ENCODE measurements at regions of chr1 and their contacts with region 1.

Region 1: GRCh38 chr1:30801771-30802198 is 44.2 kb upstream of the LAPTM5 start:
- DNase-seq: peak; percentile 42 to 55
- ATAC-seq: peak; percentile 66 to 78
- H3K4me3 ChIP-seq: peak overlapping the region in 1 of 4 donors; percentile 24
- H3K27ac ChIP-seq: no peak overlapping the region
- H3K4me1 ChIP-seq: peaks cover 3 to 26% of the 10 kb centered on the region in 2 donors
- H3K27me3 ChIP-seq: peaks cover 0 to 9% (median under 1%) of the 10 kb centered on the region in 3 donors
- CTCF ChIP-seq: peak; percentile 92 to 98 (median 95)
- POLR2A ChIP-seq: no peak

Region 2: GRCh38 chr1:30754684-30755171 is 47.1 kb before region 1 on chr1:
- in situ Hi-C with region 1: no loop called
- intact Hi-C with region 1: loop called (anchors 1 kb)
- DNase-seq: no peak
- ATAC-seq: peak; percentile 45 to 55
- H3K4me3 ChIP-seq: no peak overlapping the region
- H3K27ac ChIP-seq: no peak overlapping the region
- H3K4me1 ChIP-seq: no peaks in the 10 kb centered on the region
- H3K27me3 ChIP-seq: no peaks in the 10 kb centered on the region
- CTCF ChIP-seq: no peak
- POLR2A ChIP-seq: no peak

Region 3: DNA sequence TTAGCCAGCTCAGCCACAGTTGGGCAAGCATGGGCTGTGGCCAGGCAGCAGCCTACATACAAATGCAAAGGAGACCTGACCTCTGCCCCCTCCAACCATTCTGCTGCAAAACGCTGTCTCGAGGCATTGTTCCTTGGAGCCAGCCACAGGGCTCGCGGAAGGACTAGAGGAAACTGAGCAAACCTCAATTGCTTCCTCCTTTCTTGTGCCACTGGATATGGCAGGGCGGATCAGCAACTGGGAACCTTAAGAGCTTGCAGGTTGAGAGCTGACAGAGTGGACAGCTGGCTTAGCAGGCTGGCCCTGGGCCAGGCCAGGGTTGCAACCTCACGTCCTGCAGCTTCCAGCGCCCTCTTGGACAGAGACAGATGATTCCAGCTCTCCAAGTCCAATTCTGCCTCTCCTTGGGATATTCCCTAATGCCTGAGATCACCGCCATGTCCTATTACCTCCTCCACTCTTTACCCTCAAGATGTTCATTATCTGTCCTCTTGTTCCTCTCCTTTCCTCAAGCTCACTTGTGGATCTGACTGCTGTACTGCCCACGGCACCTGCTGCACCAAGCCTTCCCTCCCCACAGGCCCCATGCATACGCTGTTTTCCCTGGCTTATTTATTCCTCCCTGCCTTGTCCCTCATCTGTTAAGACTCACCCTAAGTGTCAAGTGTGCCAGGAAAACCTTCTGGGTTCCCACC is 39.3 kb after region 1 on chr1:
- in situ Hi-C with region 1: no loop called
- intact Hi-C with region 1: loop called (anchors 5 kb)
- DNase-seq: peak; percentile 32 to 58
- ATAC-seq: peak; percentile 65 to 81
- H3K4me3 ChIP-seq: no peak overlapping the region
- H3K27ac ChIP-seq: no peak overlapping the region
- H3K4me1 ChIP-seq: peaks cover 10 to 13% of the 10 kb centered on the region in 2 donors
- H3K27me3 ChIP-seq: peaks cover 0 to 2% (median 0%) of the 10 kb centered on the region in 3 donors
- CTCF ChIP-seq: no peak
- POLR2A ChIP-seq: no peak

Region 4: GRCh38 chr1:30911046-30911954 is 109.5 kb after region 1 on chr1:
- in situ Hi-C with region 1: loop called (anchors 5 kb)
- intact Hi-C with region 1: loop called (anchors 1 kb)
- DNase-seq: peak; percentile 72 to 80
- ATAC-seq: peak; percentile 84
- H3K4me3 ChIP-seq: no peak overlapping the region
- H3K27ac ChIP-seq: no peak overlapping the region
- H3K4me1 ChIP-seq: no peaks in the 10 kb centered on the region
- H3K27me3 ChIP-seq: peaks cover 0 to 7% (median 0%) of the 10 kb centered on the region in 3 donors
- CTCF ChIP-seq: peak; percentile 84 to 89 (median 87)
- POLR2A ChIP-seq: no peak

Region 5: DNA sequence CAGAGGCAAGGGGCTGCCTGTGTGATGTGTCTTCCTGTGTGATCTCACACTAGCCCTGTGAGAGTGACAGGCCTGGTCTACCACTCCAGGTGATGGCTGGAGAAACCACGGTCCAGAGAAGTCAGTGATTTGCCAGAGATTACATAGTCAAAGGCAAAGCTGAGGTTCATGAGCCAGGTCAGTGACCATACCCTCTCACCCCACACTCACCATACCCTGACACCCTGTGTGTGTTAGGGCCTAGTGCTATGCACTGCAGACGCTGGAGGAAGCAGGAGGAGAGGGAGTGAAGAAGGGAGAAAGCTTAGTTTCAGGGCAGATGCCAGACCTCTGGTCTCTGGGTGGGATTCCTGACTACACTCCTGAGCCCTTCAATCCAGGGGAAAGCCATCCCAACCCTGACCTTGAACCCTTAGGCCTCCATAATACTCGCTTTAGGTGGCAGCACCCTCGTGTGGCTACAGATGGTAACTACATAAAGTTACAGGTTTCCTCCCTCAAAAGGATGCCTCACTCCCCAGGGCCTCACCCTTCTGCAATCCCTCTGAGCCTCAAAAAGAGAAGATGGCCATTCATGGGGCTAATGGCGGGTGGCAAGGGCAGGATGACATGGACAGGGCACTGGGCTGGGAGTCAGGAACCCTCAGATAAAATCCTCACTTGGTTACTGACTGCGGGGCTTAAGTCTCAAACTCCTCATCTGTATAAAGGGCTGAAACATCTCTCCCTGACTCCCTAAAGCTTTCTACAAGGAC is 127.5 kb after region 1 on chr1:
- in situ Hi-C with region 1: no loop called
- intact Hi-C with region 1: loop called (anchors 5 kb)
- DNase-seq: no peak
- ATAC-seq: peak; percentile 59 to 61
- H3K4me3 ChIP-seq: no peak overlapping the region
- H3K27ac ChIP-seq: peak overlapping the region in 1 of 4 donors; percentile 3
- H3K4me1 ChIP-seq: peaks cover 8 to 13% of the 10 kb centered on the region in 2 donors
- H3K27me3 ChIP-seq: no peaks in the 10 kb centered on the region
- CTCF ChIP-seq: peak; percentile 55 to 69 (median 62)
- POLR2A ChIP-seq: no peak

Measured in gastrocnemius medialis (tissue), 4 donors.